ENCODE measurements at regions of chr1 and their contacts with region 1.

Region 1: DNA sequence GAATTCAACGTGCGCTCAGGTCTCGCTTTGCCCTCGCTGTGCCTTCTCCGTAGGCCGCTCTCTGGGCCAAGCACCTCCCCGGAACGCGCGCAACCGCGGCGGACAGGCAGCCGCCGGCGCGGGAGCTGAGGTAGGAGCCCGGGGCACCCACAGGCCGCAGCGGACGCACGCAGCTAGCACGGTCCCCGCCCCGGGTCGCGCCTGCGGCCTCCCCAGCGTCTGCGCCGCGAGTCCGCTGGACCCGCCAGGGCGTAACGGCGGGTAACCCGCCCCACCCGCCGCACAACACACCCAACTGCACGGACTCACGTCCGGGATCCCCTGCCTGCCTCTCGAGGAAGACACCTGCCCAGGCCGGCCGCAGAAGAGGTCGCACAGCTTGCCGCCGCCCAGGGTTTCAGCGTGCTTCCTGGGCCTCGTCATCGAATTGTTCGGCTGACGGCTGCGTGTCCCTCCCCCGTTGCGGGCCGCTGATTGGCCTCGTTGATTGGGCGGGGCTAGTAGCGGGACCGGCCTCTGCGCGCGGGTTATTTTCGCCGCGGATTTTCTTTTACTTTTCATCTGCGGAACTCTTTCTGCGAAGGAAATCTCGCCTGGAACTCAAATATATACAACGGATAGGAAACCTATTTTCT is at the start of gene CLCC1:
- DNase-seq: peak; percentile 92
- ATAC-seq: peak; percentile 94
- H3K4me3 ChIP-seq: peak within 1 kb of the TSS; percentile 78
- H3K27ac ChIP-seq: peak within 1 kb of the TSS; percentile 77
- H3K4me1 ChIP-seq: peaks cover 6% of the 10 kb centered on the region; the same call in 1 of the 2 replicates
- H3K27me3 ChIP-seq: no peaks in the 10 kb centered on the region
- CTCF ChIP-seq: no peak
- total RNA-seq, gene CLCC1: 29.5 and 30.4 TPM in 2 replicates

Region 2: DNA sequence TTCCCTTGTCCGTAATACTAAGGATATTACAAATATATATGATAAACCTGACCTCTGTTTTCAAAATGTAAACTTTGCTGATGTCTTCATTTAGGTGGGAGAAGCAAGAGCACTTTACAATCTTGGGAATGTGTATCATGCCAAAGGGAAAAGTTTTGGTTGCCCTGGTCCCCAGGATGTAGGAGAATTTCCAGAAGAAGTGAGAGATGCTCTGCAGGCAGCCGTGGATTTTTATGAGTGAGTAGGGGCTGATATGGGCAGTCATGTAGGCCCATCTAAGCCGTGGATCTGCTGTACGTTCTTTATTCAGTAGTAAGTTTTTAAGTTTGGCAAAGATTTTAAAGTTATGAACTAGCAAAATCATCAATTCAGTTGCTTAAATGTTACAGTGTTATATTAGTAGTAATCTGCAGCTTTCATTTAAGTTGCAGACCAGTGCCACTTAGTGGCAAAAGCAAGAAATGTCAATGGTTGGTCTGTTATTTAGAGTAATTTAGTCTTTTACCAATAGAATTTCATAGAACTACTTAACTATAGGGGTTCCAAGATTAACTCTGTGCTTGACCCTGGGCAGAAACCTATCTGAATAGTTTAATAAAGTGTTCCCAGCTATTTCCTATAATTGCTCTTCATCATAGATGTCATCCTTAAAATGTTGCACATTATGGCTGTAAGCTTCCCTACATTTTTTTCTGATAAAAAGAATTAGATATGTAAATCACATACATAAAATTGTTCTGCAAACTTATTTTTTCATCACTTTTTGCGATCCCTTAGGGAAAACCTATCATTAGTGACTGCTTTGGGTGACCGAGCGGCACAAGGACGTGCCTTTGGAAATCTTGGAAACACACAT is 65.1 kb before region 1 on chr1:
- CTCF ChIA-PET with region 1: no interaction called
- POLR2A ChIA-PET with region 1: no interaction called
- intact Hi-C with region 1: no loop called
- DNase-seq: peak; percentile 80
- ATAC-seq: peak; percentile 60
- H3K4me3 ChIP-seq: no peak overlapping the region
- H3K27ac ChIP-seq: no peak overlapping the region
- H3K4me1 ChIP-seq: peaks cover 14% of the 10 kb centered on the region
- H3K27me3 ChIP-seq: no peaks in the 10 kb centered on the region
- CTCF ChIP-seq: peak; percentile 84

Region 3: GRCh38 chr1:109041621-109042468 is 78.7 kb after region 1 on chr1 and contains the start of gene WDR47:
- CTCF ChIA-PET with region 1: no interaction called
- POLR2A ChIA-PET with region 1: no interaction called
- intact Hi-C with region 1: loop called (anchors 5 kb)
- DNase-seq: peak; percentile 96
- ATAC-seq: peak; percentile 97
- H3K4me3 ChIP-seq: peak within 1 kb of the TSS; percentile 97
- H3K27ac ChIP-seq: 0 out of 2 replicates have a peak within 1 kb of the TSS, but pooled peaks have one; percentile 3
- H3K4me1 ChIP-seq: peaks cover 6% of the 10 kb centered on the region; the same call in 1 of the 2 replicates
- H3K27me3 ChIP-seq: no peaks in the 10 kb centered on the region
- CTCF ChIP-seq: no peak
- total RNA-seq, gene WDR47: 6.2 and 7.7 TPM in 2 replicates

Region 4: GRCh38 chr1:109067883-109068282 is 104.7 kb after region 1 on chr1:
- CTCF ChIA-PET with region 1: no interaction called
- POLR2A ChIA-PET with region 1: no interaction called
- intact Hi-C with region 1: no loop called
- DNase-seq: no peak
- ATAC-seq: no peak
- H3K4me3 ChIP-seq: no peak overlapping the region
- H3K27ac ChIP-seq: no peak overlapping the region
- H3K4me1 ChIP-seq: no peaks in the 10 kb centered on the region
- H3K27me3 ChIP-seq: no peaks in the 10 kb centered on the region
- CTCF ChIP-seq: no peak